Caco-2 (cell line): ENCODE measurements at regions of chr17 and their contacts with region 1.

Region 1: GRCh38 chr17:5438716-5439445 is at the start of gene C1QBP:
- DNase-seq: peak; percentile 81 to 89
- H3K4me3 ChIP-seq: peak within 1 kb of the TSS; percentile 63
- H3K4me3 Mint-ChIP-seq: peak within 1 kb of the TSS; percentile 73
- H3K27ac Mint-ChIP-seq: peak within 1 kb of the TSS; percentile 81
- H3K4me1 ChIP-seq: no peaks in the 10 kb centered on the region
- H3K4me1 Mint-ChIP-seq: no peaks in the 10 kb centered on the region
- H3K27me3 ChIP-seq: no peaks in the 10 kb centered on the region
- H3K27me3 Mint-ChIP-seq: no peaks in the 10 kb centered on the region
- CTCF ChIP-seq: peak; percentile 75 to 82
- total RNA-seq, gene C1QBP: 129 and 149 TPM in 2 replicates

Region 2: DNA sequence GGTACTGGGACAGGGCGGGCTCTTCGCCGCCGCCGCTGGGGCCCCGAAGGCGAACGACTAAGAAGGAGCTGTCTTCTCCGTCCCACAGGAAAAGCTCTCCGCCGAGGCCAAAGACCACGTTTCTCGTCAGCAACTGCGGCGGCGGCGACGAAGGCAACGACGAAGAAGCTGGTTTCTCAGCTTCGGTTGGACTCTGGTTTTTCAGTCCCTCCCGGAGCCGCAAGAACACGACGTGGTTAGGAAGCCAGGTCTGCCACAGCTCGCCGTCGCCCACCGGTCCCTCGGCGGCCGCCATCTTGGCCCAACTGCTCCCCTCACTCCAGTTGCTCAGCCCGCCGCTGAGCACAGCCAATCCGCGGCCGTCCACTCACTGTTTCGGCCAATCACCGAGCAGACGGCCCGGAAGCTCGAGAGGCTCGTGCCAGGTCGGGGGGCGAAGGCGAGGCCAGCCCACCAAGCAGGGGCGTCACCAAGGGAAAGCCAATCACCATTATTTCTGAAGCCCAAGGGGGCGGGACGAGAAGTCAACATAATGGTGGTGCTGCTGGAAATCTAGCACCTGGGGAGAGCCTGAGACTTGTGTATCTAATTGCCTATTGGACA is 19.4 kb before region 1 on chr17 and contains the start of gene NUP88:
- CTCF ChIA-PET with region 1: interaction called, 10 read pairs
- POLR2A ChIA-PET with region 1: interaction called, 5 read pairs
- intact Hi-C with region 1: loop called (anchors 1 kb)
- DNase-seq: peak; percentile 93 to 94
- H3K4me3 ChIP-seq: peak within 1 kb of the TSS; percentile 77
- H3K4me3 Mint-ChIP-seq: peak within 1 kb of the TSS; percentile 94
- H3K27ac Mint-ChIP-seq: peak within 1 kb of the TSS; percentile 93
- H3K4me1 ChIP-seq: no peaks in the 10 kb centered on the region
- H3K4me1 Mint-ChIP-seq: no peaks in the 10 kb centered on the region
- H3K27me3 ChIP-seq: no peaks in the 10 kb centered on the region
- H3K27me3 Mint-ChIP-seq: no peaks in the 10 kb centered on the region
- CTCF ChIP-seq: no peak
- total RNA-seq, gene NUP88: 52.3 and 56.6 TPM in 2 replicates